Lower leg skin (tissue), 4 donors: ENCODE measurements at regions of chr20 and their contacts with region 1.

Region 1: GRCh38 chr20:23419995-23420901 is 1.0 kb downstream of the NAPB start:
- DNase-seq: peak; percentile 24 to 89
- H3K4me3 ChIP-seq: peak overlapping the region; percentile 91
- CTCF ChIP-seq: no peak
- POLR2A ChIP-seq: no peak

Region 2: DNA sequence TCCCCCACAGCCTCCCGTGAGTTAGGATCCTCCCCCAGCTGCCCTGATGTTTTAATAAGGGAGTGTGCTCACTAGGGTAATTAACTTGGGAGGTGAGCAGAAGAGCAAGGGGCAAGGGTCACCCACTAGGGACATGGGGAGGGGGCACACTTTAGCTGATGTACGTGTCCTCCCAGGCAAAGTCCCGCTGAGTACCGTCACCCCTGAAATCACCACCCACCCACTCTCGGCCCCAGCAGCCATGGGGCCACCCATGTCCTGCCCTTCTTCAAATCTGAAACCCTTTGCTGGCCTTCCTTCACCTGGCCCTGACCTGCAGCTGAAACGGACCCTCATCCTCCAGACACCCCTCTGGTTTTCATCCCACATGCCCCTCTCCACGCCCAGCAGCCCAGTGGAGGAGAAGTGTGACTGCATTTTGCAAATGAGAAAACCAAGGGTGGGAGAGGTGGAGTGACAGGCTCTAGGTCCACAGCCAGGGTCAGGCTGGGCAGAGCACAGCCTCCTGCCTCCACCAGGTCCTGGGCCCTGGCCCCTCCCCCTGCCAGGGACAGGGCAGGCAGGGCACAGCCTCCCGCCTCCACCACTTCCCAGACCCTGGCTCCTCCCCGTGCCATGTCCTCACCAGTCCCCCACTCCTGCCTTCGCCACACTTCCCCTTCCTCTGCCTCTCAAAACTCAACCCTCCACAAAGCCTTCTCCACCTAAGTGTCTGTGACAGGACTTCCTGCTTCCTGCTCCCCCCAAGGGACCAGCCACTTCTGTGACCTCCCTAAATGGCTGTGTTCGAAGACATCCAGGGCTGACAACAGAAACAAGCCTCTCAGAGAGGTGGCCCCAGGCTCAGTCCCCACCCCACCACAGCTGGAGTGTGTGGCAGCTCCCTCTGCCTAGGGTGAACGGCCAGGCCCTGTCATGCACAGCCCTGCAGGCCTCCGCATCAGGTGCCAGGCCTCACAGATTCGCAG is 1622.6 kb after region 1 on chr20:
- intact Hi-C with region 1: loop called (anchors 10 kb)
- DNase-seq: no peak
- H3K4me3 ChIP-seq: no peak overlapping the region
- CTCF ChIP-seq: no peak
- POLR2A ChIP-seq: no peak